ENCODE measurements at regions of chr14 and their contacts with region 1.

Region 1: DNA sequence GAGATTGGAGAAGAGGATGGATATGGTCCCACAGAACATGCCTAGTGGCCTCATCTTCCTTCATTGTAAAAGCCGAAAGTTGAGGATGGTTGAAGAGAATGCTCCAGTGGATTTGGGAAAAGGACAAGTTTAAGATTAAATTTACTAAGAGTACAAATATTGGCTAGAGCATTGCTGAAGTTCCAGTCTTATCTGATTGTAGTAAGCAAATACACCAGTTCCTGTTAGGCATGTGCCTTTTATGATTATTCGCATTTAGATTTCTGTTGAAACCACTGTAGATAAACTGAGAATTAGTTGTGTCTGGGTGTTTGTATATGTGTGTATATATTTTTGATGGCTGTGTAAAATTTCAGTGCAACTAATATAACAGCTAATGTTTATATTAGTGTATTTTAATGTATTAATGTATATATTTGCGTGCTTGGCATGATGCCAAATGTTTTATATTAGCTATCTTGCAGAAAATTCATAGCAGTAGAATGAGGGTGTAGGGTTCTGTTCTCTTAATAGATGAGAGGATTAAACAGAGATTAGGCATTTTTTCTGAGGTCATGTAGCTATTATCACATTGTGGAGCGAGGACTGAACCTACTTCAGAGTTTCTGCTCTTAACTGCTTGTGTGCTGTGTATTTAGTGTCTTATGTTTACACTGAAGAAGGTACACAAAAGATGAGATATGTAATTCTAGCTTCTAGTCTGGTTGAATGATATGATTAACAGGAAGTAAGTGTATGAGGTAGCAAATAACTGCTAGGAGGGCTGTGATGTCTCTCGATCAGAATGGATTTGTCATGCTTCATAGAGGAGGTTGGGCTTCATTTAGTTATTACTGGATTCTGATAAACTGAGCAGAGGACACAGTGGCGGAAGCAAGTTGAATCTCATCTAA is 21.1 kb downstream of the FKBP3 start:
- DNase-seq: no peak
- H3K4me3 ChIP-seq: no peak overlapping the region
- H3K27ac ChIP-seq: no peak overlapping the region
- H3K4me1 ChIP-seq: peaks cover 7% of the 10 kb centered on the region; the same call in 1 of the 2 replicates
- H3K27me3 ChIP-seq: no peaks in the 10 kb centered on the region
- CTCF ChIP-seq: no peak

Region 2: GRCh38 chr14:44846232-44846824 is 266.8 kb before region 1 on chr14:
- CTCF ChIA-PET with region 1: no interaction called
- POLR2A ChIA-PET with region 1: no interaction called
- intact Hi-C with region 1: no loop called
- DNase-seq: no peak
- H3K4me3 ChIP-seq: no peak overlapping the region
- H3K27ac ChIP-seq: no peak overlapping the region
- H3K4me1 ChIP-seq: no peaks in the 10 kb centered on the region
- H3K27me3 ChIP-seq: no peaks in the 10 kb centered on the region
- CTCF ChIP-seq: peak; percentile 87

Region 3: DNA sequence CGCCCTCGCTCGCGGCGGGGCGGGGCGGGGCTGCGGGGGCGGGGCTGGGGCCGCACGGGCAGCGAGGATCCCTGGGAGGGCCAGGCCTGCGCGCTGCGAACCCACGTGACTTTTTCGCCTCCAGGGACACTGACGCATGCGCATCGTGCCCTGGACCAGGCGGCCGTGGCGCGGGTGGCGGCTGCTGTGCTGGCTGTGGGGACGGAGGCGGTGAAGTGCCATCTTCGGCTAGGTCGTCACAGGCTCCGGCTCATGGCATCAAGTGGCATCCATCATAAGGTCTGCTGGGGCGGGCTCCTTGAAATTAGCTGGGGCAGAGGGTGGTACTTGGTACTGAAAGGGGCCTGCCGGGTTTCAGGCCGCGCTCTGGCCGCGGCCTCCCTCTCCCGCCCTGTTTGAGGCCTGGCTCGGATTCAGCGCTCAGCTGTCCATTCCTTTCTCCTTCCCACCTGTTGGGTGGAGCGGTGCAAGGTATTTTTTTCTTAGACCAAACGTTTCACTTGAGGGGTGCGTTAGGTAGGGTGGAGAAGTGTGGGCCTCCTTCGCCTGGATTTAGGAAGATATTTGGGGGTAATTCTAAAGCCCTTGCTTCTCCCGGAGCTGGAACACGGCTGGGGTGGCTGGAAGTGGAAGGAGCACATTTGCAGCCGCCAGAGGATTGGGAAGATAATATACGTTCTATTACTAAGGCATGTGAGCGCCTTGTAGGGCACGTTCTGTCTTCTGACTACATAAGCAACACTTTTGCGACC is 29.0 kb before region 1 on chr14 and contains the start of gene PRPF39:
- CTCF ChIA-PET with region 1: no interaction called
- POLR2A ChIA-PET with region 1: interaction called, 21 read pairs
- intact Hi-C with region 1: no loop called
- DNase-seq: peak; percentile 81 to 96
- H3K4me3 ChIP-seq: peak within 1 kb of the TSS; percentile 80
- H3K27ac ChIP-seq: peak within 1 kb of the TSS; percentile 60
- H3K4me1 ChIP-seq: peaks cover 30% of the 10 kb centered on the region
- H3K27me3 ChIP-seq: no peaks in the 10 kb centered on the region
- CTCF ChIP-seq: no peak
- total RNA-seq, gene PRPF39: 33.4 and 37.2 TPM in 2 replicates

Region 4: DNA sequence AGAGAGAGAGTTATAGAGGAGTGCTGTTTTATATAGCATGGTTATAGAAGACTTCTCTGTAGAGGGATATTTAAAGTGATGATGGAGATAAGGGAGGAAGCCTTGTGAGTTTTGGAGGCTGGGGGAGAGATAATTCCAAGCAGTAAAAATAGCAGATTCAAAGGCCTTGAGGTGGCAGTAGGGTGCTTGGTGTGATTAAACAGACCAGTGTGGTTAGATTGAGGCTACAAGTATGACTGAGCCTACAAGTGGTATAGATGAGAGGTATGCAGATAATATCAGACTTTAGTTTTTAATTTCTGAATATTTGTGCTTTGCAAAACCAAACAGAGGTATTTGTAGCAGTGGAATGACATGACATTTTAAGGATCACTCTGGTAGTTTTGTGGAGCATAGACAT is 42.9 kb after region 1 on chr14:
- CTCF ChIA-PET with region 1: no interaction called
- POLR2A ChIA-PET with region 1: no interaction called
- intact Hi-C with region 1: no loop called
- DNase-seq: no peak
- H3K4me3 ChIP-seq: no peak overlapping the region
- H3K27ac ChIP-seq: no peak overlapping the region
- H3K4me1 ChIP-seq: no peaks in the 10 kb centered on the region
- H3K27me3 ChIP-seq: no peaks in the 10 kb centered on the region
- CTCF ChIP-seq: no peak

Region 5: DNA sequence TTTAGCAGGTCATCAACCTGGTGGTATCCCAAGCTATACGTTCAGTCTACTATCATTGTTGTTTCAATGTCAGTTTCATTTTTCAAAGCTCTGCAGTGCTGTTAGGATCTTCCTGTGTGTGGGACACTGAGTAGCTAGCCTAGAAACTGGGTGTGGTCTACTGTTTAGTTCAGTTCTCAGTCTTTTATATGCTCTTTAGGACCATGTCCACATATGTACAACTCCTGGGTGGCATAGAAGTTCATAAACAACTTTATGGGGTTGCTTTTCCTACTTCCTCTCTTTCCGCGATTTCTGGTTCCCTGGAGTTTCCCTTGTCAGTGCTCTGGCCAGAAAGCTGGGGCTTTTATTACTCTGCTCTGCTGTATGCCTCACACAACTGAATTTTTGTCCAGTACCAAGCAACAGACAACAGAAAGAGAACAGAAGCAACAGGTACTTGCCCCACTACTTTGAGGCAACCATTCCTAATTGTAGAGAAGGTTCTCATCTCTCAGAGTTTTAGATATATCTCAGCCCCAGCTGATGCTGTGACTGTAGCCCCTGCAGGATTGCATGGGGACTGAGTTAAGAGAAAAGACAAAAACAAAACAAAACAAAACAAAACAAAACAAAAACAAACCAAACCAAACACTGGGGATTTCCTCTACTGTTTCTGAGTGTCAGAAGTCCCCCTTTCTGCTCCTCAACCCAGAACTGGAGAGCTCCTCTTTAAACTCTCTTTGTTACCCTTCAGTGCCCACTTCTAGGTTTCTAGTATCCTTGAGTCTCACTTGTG is 109.5 kb after region 1 on chr14:
- CTCF ChIA-PET with region 1: no interaction called
- POLR2A ChIA-PET with region 1: no interaction called
- intact Hi-C with region 1: loop called (anchors 10 kb)
- DNase-seq: no peak
- H3K4me3 ChIP-seq: no peak overlapping the region
- H3K27ac ChIP-seq: no peak overlapping the region
- H3K4me1 ChIP-seq: no peaks in the 10 kb centered on the region
- H3K27me3 ChIP-seq: no peaks in the 10 kb centered on the region
- CTCF ChIP-seq: no peak